Endothelial cell of umbilical vein (primary cell): ENCODE measurements at regions of chr10 and their contacts with region 1.

Region 1: GRCh38 chr10:35172574-35172973 is 45.9 kb downstream of the CREM start:
- DNase-seq: peak; percentile 98
- H3K4me3 ChIP-seq: peak overlapping the region in 1 of 3 experiments; percentile 18
- H3K27ac ChIP-seq: peak overlapping the region; percentile 65
- H3K4me1 ChIP-seq: peaks cover 17% of the 10 kb centered on the region
- H3K27me3 ChIP-seq: no peaks in the 10 kb centered on the region
- CTCF ChIP-seq: no peak
- POLR2A ChIP-seq: no peak

Region 2: DNA sequence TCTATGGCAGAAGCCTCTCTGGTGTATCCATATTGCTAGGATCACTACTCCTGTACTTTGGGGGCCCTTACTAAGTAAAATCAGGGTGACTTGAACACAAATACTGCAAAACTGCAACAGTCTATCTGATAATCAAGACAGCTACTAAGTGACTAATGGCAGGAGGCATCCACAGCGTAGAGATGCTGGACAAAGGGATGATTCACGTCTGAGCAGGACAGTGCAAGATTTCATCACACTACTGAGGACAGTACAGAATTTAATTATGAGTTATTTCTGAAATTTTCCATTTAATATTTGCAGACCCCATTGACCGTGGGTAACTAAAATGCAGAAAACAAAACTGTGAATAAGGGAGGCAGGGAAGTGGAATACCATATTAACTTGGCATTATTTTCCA is 92.8 kb before region 1 on chr10:
- CTCF ChIA-PET with region 1: no interaction called
- POLR2A ChIA-PET with region 1: no interaction called
- dilution Hi-C with region 1: no loop called
- intact Hi-C with region 1: no loop called
- DNase-seq: no peak
- H3K4me3 ChIP-seq: no peak overlapping the region
- H3K27ac ChIP-seq: no peak overlapping the region
- H3K4me1 ChIP-seq: no peaks in the 10 kb centered on the region
- H3K27me3 ChIP-seq: no peaks in the 10 kb centered on the region
- CTCF ChIP-seq: no peak
- POLR2A ChIP-seq: no peak

Region 3: DNA sequence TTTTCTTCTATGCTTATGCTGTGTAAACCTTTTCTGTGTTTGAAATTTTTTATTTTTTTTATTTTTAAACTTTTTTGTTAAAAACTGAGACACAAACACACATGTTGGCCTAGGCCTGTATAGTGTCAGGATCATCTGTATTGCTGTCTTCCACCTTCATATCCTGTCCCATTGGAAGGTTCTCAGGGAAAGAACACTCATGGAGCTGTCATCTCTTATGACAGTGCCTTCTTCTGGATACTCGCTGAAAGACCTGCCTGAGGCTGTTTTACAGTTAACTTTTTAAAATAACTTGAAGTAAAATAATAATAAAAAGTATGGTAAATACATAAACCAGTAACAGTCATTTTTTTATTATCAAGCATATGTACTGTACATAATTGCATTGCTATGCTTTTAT is 11.8 kb before region 1 on chr10:
- CTCF ChIA-PET with region 1: interaction called, 11 read pairs
- POLR2A ChIA-PET with region 1: no interaction called
- dilution Hi-C with region 1: no loop called
- intact Hi-C with region 1: no loop called
- DNase-seq: no peak
- H3K4me3 ChIP-seq: no peak overlapping the region
- H3K27ac ChIP-seq: no peak overlapping the region
- H3K4me1 ChIP-seq: no peaks in the 10 kb centered on the region
- H3K27me3 ChIP-seq: no peaks in the 10 kb centered on the region
- CTCF ChIP-seq: no peak
- POLR2A ChIP-seq: no peak

Region 4: GRCh38 chr10:35184527-35185171 is 12.1 kb after region 1 on chr10:
- CTCF ChIA-PET with region 1: interaction called, 24 read pairs
- POLR2A ChIA-PET with region 1: no interaction called
- dilution Hi-C with region 1: no loop called
- intact Hi-C with region 1: no loop called
- DNase-seq: peak; percentile 18
- H3K4me3 ChIP-seq: no peak overlapping the region
- H3K27ac ChIP-seq: no peak overlapping the region
- H3K4me1 ChIP-seq: no peaks in the 10 kb centered on the region
- H3K27me3 ChIP-seq: no peaks in the 10 kb centered on the region
- CTCF ChIP-seq: no peak
- POLR2A ChIP-seq: no peak

Region 5: GRCh38 chr10:35613597-35614226 is 441.1 kb after region 1 on chr10:
- CTCF ChIA-PET with region 1: no interaction called
- POLR2A ChIA-PET with region 1: no interaction called
- dilution Hi-C with region 1: no loop called
- intact Hi-C with region 1: no loop called
- DNase-seq: peak; percentile 44
- H3K4me3 ChIP-seq: no peak overlapping the region
- H3K27ac ChIP-seq: no peak overlapping the region
- H3K4me1 ChIP-seq: no peaks in the 10 kb centered on the region
- H3K27me3 ChIP-seq: peaks cover 19 to 22% of the 10 kb centered on the region in 2 experiments
- CTCF ChIP-seq: peak; percentile 30 to 46
- POLR2A ChIP-seq: no peak